ENCODE measurements at regions of chr5 and their contacts with region 1.

Region 1: DNA sequence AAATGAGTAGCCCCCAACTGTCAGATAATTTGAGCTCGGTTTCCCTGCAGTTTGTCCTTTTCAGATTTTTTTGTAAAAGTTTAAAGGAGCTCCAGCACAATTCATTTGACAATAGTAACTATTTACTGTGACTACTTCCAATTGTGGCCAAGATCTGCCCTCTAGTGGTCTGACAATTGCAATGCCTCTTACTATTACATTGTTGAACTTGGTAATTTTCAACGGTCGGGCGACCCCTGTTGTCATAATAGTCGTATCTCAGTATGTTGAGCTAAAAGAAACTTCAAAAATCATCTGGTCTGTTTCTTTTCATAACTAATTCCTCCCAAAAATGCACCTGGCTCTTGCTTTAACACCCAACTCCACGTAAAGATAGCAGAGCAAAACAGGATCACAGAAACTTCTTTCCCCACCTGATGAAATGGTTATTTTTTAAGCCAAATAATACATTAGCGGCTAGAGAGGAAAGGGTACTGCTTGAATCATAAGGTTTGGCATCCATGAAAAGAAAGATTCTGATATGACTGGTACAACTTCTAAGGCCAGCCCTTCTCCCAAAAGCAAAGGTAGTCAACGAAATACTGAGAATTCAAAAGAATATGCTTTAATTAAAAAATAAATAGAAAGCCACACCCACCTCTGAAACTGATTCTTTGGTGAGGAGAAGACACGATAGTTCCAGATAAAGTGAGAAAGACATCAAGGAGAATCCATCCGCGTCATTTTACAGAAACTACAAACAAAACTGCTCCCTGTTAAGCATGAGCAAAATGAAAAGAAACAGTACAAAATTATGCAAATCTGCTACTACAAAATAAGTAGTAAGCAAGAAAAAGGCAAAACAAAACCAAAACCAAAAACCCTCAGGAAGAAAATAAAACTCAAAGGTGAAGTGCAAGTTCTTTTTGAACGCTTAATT is 76.9 kb upstream of the HTR4 start:
- DNase-seq: peak; percentile 49
- H3K4me3 Mint-ChIP-seq: no peak overlapping the region
- H3K27ac Mint-ChIP-seq: no peak overlapping the region
- H3K4me1 Mint-ChIP-seq: peaks cover 10% of the 10 kb centered on the region
- H3K27me3 Mint-ChIP-seq: peaks cover 21% of the 10 kb centered on the region

Region 2: GRCh38 chr5:148179234-148179824 is 551.9 kb before region 1 on chr5:
- intact Hi-C with region 1: loop called (anchors 1 kb)
- DNase-seq: no peak
- H3K4me3 Mint-ChIP-seq: no peak overlapping the region
- H3K27ac Mint-ChIP-seq: no peak overlapping the region
- H3K4me1 Mint-ChIP-seq: peaks cover 1% of the 10 kb centered on the region
- H3K27me3 Mint-ChIP-seq: no peaks in the 10 kb centered on the region

Region 3: GRCh38 chr5:148595697-148596096 is 135.5 kb before region 1 on chr5:
- intact Hi-C with region 1: no loop called
- DNase-seq: no peak
- H3K4me3 Mint-ChIP-seq: no peak overlapping the region
- H3K27ac Mint-ChIP-seq: no peak overlapping the region
- H3K4me1 Mint-ChIP-seq: no peaks in the 10 kb centered on the region
- H3K27me3 Mint-ChIP-seq: peaks cover 17% of the 10 kb centered on the region

Region 4: GRCh38 chr5:148826053-148826738 is 95.0 kb after region 1 on chr5 and contains the start of gene ADRB2:
- intact Hi-C with region 1: loop called (anchors 5 kb)
- DNase-seq: peak; percentile 85
- H3K4me3 Mint-ChIP-seq: peak within 1 kb of the TSS; percentile 85
- H3K27ac Mint-ChIP-seq: peak within 1 kb of the TSS; percentile 62
- H3K4me1 Mint-ChIP-seq: peaks cover 18% of the 10 kb centered on the region
- H3K27me3 Mint-ChIP-seq: peaks cover 67% of the 10 kb centered on the region
- total RNA-seq, gene ADRB2: 0.21 and 0.30 TPM in 2 replicates

Region 5: GRCh38 chr5:149035372-149035790 is 304.2 kb after region 1 on chr5:
- intact Hi-C with region 1: loop called (anchors 1 kb)
- DNase-seq: peak; percentile 32
- H3K4me3 Mint-ChIP-seq: no peak overlapping the region
- H3K27ac Mint-ChIP-seq: no peak overlapping the region
- H3K4me1 Mint-ChIP-seq: peaks cover 22% of the 10 kb centered on the region
- H3K27me3 Mint-ChIP-seq: peaks cover 6% of the 10 kb centered on the region